OCI-LY7 (cell line): ENCODE measurements at regions of chr12 and their contacts with region 1.

Region 1: GRCh38 chr12:14562279-14562678 is 5.4 kb downstream of the PLBD1 start:
- DNase-seq: no peak
- H3K4me3 ChIP-seq: no peak overlapping the region
- H3K27ac ChIP-seq: no peak overlapping the region
- H3K4me1 ChIP-seq: peaks cover 36% of the 10 kb centered on the region
- CTCF ChIP-seq: no peak

Region 2: DNA sequence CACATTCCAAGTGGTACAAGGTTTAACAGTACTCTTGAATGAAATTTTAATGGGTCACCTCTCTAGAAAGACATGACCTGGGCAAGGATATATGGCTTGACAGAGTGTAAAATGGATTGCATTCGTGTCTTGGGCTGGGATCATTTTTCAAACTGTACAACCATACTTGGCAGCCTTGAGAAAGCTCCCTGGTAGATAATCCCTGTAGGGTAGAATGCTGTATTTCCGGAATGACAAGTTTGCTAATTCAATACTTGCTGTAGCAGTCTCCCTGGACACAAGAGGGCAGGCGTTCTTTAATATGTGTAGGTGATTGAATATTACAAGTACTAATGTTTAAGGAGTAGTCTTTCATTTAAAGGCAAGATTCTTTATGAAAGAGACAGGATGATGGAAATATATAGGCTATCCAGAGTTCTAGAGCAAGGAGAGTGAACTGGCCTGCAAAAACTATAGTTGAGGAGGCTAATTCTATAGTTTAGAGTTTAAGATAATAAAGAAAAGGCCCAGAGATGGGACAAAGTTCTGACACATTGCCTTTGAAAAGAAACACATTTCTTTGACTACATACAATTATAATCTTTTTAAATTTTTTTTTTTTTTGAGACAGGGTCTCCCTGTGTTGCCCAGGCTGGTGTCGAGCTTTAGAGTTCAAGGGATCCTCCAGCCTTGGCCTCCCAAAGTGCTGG is 48.0 kb before region 1 on chr12:
- CTCF ChIA-PET with region 1: no interaction called
- POLR2A ChIA-PET with region 1: no interaction called
- intact Hi-C with region 1: loop called (anchors 2 kb)
- DNase-seq: peak; percentile 80
- H3K4me3 ChIP-seq: no peak overlapping the region
- H3K27ac ChIP-seq: no peak overlapping the region
- H3K4me1 ChIP-seq: peaks cover 6% of the 10 kb centered on the region
- CTCF ChIP-seq: peak; percentile 92